ENCODE measurements at regions of chr22 and their contacts with region 1.

Region 1: GRCh38 chr22:44625981-44626687 is 75.9 kb upstream of the PRR5 start:
- DNase-seq: peak; percentile 79 to 89
- H3K4me3 ChIP-seq: no peak overlapping the region
- H3K27ac ChIP-seq: no peak overlapping the region
- H3K4me1 ChIP-seq: peaks cover 0 to 5% (median 2%) of the 10 kb centered on the region in 4 donors
- H3K27me3 ChIP-seq: peaks cover 0 to 68% (median 22%) of the 10 kb centered on the region in 3 donors
- CTCF ChIP-seq: peak in 6 of 7 experiments; percentile 82 to 100 (median 98)
- EP300 ChIP-seq: no peak
- POLR2A ChIP-seq: no peak

Region 2: GRCh38 chr22:44080936-44081861 is 544.9 kb before region 1 on chr22:
- intact Hi-C with region 1: loop called (anchors 5 kb)
- DNase-seq: peak; percentile 79 to 92
- H3K4me3 ChIP-seq: peak overlapping the region in 1 of 4 donors; percentile 19
- H3K27ac ChIP-seq: peak overlapping the region in 1 of 5 donors; percentile 16
- H3K4me1 ChIP-seq: peaks cover 0 to 17% (median 8%) of the 10 kb centered on the region in 4 donors
- H3K27me3 ChIP-seq: no peaks in the 10 kb centered on the region
- CTCF ChIP-seq: peak in 5 of 7 experiments; percentile 64 to 89 (median 80)
- EP300 ChIP-seq: no peak
- POLR2A ChIP-seq: no peak

Region 3: DNA sequence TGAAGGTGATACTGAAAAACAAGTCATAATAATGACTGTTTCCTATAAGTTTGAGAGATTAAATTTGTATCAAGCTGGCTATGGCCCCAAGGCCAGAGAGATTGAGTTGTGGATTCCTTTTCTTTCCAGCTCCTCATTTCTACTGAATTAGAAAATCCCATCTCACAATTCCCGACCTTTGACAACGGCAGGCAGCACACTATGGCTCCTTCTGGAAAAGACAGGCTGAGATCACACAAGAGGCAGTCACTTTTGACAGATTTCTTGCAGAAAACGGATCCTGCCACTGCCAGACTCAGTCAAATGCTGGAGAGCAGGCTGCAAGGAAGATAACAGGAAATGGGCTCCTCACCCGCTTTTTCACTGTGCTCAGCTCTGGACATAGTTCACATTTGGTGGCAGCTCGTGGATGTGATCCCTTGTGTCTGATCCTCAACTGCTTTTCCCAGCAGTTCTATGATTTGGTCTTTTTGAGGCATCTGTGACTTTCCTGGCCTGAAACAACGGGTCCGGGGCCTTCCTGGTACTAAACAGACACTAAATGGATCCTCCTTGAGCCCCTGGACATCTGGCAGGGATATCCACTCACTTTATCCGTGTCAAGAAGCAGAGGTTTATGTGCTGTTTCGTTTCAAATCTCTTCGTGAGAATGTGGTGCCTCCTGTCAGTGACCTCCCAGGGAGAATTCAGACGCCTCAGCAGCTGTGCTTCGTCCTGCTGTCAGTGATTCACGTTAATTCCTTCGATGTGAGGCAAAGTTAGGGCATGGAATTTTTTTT is 102.0 kb before region 1 on chr22:
- intact Hi-C with region 1: no loop called
- DNase-seq: peak; percentile 38 to 73
- H3K4me3 ChIP-seq: no peak overlapping the region
- H3K27ac ChIP-seq: peak overlapping the region; percentile 22 to 73 (median 48)
- H3K4me1 ChIP-seq: peaks cover 0 to 3% (median 0%) of the 10 kb centered on the region in 4 donors
- H3K27me3 ChIP-seq: peaks cover 0 to 49% (median 0%) of the 10 kb centered on the region in 3 donors
- CTCF ChIP-seq: no peak
- EP300 ChIP-seq: no peak
- POLR2A ChIP-seq: no peak

Measured in stomach (tissue), 19 donors.